HepG2 (cell line): ENCODE measurements at regions of chr4 and their contacts with region 1.

Region 1: DNA sequence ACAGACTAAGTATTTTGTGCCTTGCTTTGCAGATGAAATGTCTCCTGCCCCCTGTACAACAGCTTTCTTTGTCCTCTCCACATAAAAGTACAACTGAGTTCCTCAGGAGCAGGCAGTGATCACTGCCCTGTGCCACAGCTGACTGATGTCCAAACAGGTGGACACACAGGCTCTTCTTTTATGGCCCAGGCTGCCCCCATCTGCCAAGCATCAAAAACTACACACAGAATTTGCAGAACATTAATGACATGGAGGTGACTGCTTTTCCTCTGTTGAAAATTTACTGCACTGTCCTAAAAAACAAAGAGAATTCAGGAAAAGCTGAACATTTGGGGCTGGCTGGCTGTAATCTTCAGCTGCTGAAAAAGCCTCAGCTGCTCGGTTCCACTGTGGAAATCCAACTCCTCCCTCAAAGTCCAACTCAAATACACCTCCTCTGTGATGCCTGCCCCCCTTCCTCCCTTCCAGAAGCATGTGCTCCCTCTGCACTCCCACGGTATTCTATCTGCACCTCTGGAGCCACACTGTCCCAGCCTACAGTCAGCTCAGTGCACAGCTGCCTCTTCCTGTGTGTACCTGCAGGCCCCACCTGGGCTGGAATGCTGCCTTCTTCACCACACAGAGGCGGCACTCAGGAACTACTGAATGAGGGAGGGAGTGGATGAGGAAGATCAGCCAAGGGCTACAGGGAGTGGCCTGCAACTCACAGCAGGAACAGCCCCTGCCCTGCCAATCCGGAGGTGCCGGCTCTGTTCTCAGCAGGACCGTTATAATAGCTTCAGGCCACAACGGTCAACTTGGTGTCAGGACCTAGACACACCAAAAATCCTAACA is 10.3 kb downstream of the AFAP1 start:
- DNase-seq: peak; percentile 56
- ATAC-seq: peak; percentile 92
- H3K4me3 ChIP-seq: no peak overlapping the region
- H3K27ac ChIP-seq: no peak overlapping the region
- H3K4me1 ChIP-seq: peaks cover 28% of the 10 kb centered on the region
- H3K27me3 ChIP-seq: no peaks in the 10 kb centered on the region
- CTCF ChIP-seq: peak; percentile 75
- EP300 ChIP-seq: no peak
- POLR2A ChIP-seq: no peak
- RAD21 ChIP-seq: peak; percentile 52; the same call in 1 of the 2 replicates

Region 2: DNA sequence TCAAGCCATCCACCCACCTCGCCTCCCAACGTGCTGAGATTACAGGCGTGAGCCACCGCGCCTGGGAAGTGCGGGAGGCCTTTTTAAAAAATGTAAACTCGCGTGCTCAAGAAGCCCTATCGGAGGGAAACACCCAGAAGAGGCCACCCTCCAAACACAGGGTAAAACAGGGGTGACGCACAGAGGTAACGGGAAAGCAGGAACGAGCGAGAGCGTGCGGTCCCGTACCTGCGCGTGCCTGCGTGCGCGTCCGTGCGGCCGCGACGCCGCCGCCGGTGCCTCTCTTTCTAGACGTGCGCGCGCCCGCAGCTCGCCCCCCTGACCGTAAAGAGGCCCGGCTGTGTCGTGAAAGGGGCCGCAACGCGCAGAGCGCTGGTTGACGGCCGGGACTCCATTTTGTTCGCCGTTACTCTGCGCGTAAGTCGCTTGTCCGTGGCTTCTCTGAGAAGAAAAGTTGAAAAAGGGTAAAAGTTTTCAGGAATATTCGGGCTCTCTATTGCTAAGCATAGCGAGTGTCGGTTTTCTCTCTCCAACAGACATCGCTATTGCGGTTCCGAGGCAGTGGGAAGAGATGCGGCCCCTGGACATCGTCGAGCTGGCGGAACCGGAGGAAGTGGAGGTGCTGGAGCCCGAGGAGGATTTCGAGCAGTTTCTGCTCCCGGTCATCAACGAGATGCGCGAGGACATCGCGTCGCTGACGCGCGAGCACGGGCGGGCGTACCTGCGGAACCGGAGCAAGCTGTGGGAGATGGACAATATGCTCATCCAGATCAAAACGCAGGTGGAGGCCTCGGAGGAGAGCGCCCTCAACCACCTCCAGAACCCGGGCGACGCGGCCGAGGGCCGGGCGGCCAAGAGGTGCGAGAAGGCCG is 1288.8 kb before region 1 on chr4 and contains the start of gene MRFAP1:
- CTCF ChIA-PET with region 1: no interaction called
- POLR2A ChIA-PET with region 1: no interaction called
- in situ Hi-C with region 1: no loop called
- intact Hi-C with region 1: no loop called
- DNase-seq: peak; percentile 86
- ATAC-seq: peak; percentile 91
- H3K4me3 ChIP-seq: peak within 1 kb of the TSS; percentile 67 to 91 (median 74)
- H3K27ac ChIP-seq: peak within 1 kb of the TSS; percentile 84
- H3K4me1 ChIP-seq: peaks cover 38% of the 10 kb centered on the region
- H3K27me3 ChIP-seq: no peaks in the 10 kb centered on the region; a peak in 1 of 5 replicates
- CTCF ChIP-seq: no peak
- EP300 ChIP-seq: no peak; a peak in 1 of 4 replicates
- POLR2A ChIP-seq: peak; percentile 83 to 94
- RAD21 ChIP-seq: no peak
- total RNA-seq, gene MRFAP1: 158 and 254 TPM in 2 replicates

Region 3: DNA sequence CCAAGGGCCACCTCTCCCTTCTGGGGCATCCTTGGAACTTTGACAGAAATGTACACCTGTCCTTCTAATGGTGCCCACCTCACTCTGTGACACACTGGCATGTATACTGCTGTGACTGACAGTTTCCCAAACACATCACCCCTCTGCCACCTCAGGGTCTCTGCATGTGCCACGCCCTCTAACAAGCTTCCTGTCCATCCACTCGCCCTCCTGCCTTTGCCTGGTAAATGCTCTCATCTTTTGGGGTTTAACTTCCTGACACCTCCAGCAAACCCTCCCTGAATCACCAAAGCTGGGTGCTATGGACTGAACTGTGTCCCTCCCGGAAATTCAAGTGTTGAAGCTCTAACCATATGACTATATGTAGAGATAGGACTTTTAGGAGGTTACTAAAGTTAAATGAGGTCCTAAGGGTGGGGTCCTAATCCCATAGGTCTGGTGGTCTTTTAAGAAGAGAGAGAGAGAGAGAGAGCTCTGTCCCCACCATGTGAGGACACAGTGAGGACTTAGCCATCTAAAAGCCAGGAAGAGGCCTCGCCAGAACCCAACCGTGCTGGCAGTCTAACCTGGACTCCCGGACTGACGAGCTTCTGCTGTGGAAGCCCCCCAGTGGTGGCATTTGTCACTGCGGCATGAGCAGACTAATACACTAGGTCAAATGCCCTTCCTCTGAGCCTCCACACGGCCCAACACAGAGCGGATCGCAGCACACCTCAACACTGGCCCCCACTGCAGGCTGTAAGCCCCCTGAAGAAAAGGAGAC is 85.3 kb before region 1 on chr4:
- CTCF ChIA-PET with region 1: interaction called, 3 read pairs
- POLR2A ChIA-PET with region 1: no interaction called
- in situ Hi-C with region 1: no loop called
- intact Hi-C with region 1: loop called (anchors 1 kb)
- DNase-seq: peak; percentile 70
- ATAC-seq: peak; percentile 99
- H3K4me3 ChIP-seq: no peak overlapping the region
- H3K27ac ChIP-seq: no peak overlapping the region
- H3K4me1 ChIP-seq: peaks cover 20% of the 10 kb centered on the region
- H3K27me3 ChIP-seq: no peaks in the 10 kb centered on the region
- CTCF ChIP-seq: peak; percentile 84
- EP300 ChIP-seq: no peak
- POLR2A ChIP-seq: no peak
- RAD21 ChIP-seq: peak; percentile 73

Region 4: GRCh38 chr4:7876201-7876875 is 53.0 kb before region 1 on chr4:
- CTCF ChIA-PET with region 1: no interaction called
- POLR2A ChIA-PET with region 1: no interaction called
- in situ Hi-C with region 1: no loop called
- intact Hi-C with region 1: loop called (anchors 1 kb)
- DNase-seq: peak; percentile 55
- ATAC-seq: peak; percentile 99
- H3K4me3 ChIP-seq: no peak overlapping the region
- H3K27ac ChIP-seq: no peak overlapping the region
- H3K4me1 ChIP-seq: peaks cover 31% of the 10 kb centered on the region
- H3K27me3 ChIP-seq: no peaks in the 10 kb centered on the region
- CTCF ChIP-seq: peak; percentile 54
- EP300 ChIP-seq: no peak
- POLR2A ChIP-seq: no peak
- RAD21 ChIP-seq: peak; percentile 32; the same call in 1 of the 2 replicates

Region 5: DNA sequence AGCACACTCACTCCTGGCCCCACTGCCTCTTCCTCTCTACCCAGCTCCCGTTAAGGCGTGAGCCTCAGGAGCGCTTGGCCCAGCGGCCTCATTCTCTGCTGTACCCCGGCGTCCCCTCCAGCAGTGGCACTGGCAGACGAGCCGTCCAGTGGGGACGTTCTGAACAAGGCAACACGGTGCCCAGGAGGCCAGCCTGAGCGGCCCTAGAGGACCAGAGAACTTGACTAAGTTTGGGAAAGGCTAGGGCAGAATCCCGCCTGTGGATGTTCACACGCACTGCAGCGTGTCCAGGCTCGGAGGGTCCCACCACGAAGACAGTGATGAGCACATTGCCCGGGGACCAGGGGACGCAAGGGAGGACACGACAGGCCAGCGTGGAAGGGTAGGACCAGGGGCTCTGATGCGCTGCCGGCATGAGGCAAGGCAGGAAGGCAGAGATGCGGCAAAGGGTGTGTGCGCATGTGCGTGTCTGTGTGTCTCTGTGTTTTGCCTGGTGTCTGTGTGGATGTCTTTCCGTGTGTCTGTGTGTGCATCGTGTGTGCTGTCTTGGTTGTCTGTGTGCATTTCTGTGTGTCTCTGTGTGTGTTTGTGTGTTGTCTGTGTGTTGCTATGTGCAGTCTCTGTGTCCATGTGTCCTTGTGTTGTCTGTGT is 139.9 kb after region 1 on chr4:
- CTCF ChIA-PET with region 1: no interaction called
- POLR2A ChIA-PET with region 1: no interaction called
- in situ Hi-C with region 1: no loop called
- intact Hi-C with region 1: no loop called
- DNase-seq: no peak
- ATAC-seq: peak; percentile 37; the same call in 2 of the 3 replicates
- H3K4me3 ChIP-seq: no peak overlapping the region
- H3K27ac ChIP-seq: no peak overlapping the region
- H3K4me1 ChIP-seq: peaks cover 14% of the 10 kb centered on the region; the same call in 1 of the 2 replicates
- H3K27me3 ChIP-seq: peaks cover 9 to 56% of the 10 kb centered on the region in 2 experiments
- CTCF ChIP-seq: no peak
- EP300 ChIP-seq: no peak
- POLR2A ChIP-seq: no peak
- RAD21 ChIP-seq: no peak